Mammary epithelial cell (primary cell): ENCODE measurements at regions of chr5 and their contacts with region 1.

Region 1: GRCh38 chr5:160324886-160325285 is 12.5 kb upstream of the CCNJL start:
- DNase-seq: no peak
- H3K4me3 ChIP-seq: no peak overlapping the region
- H3K27ac ChIP-seq: no peak overlapping the region
- H3K4me1 ChIP-seq: no peaks in the 10 kb centered on the region
- H3K27me3 ChIP-seq: no peaks in the 10 kb centered on the region
- CTCF ChIP-seq: no peak

Region 2: DNA sequence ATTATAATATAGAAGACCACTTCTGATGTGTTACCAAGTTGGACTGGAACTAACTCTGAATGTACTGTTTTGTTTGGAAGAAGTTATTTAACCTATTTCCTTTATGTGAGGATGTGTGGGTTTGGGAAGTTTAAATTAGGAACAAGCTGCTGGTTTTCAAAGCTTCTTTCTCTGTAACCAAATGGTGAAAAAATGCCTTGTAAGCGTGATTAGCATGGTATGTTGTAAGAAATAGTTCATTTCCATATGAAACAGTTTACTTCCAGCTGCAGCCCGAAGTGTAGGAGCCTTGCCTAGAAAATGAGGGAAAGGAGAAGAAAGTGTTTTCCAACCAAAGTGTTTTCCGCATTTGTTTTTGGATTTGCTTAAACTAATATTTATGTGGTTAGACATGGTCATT is 279.9 kb before region 1 on chr5:
- CTCF ChIA-PET with region 1: no interaction called
- dilution Hi-C with region 1: no loop called
- in situ Hi-C with region 1: no loop called
- intact Hi-C with region 1: no loop called
- DNase-seq: no peak
- H3K4me3 ChIP-seq: no peak overlapping the region
- H3K27ac ChIP-seq: no peak overlapping the region
- H3K4me1 ChIP-seq: no peaks in the 10 kb centered on the region
- H3K27me3 ChIP-seq: no peaks in the 10 kb centered on the region
- CTCF ChIP-seq: no peak

Region 3: GRCh38 chr5:160293901-160294561 is 30.9 kb before region 1 on chr5:
- CTCF ChIA-PET with region 1: no interaction called
- dilution Hi-C with region 1: loop called (anchors 5 kb)
- in situ Hi-C with region 1: no loop called
- intact Hi-C with region 1: no loop called
- DNase-seq: peak; percentile 59
- H3K4me3 ChIP-seq: no peak overlapping the region
- H3K27ac ChIP-seq: peak overlapping the region; percentile 79
- H3K4me1 ChIP-seq: peaks cover 57% of the 10 kb centered on the region
- H3K27me3 ChIP-seq: no peaks in the 10 kb centered on the region
- CTCF ChIP-seq: no peak